Activated T-helper 2 cell treated with anti-CD3 and anti-CD28 coated beads, Interferon-gamma antibody, Interleukin-2, Interleukin-4, amounts not matched to agents 10 μg/mL and 5 μg/mL and 100 μg/mL, durations not matched to agents 14 hours and 24 hours and 36 hours (primary cell): ENCODE measurements at regions of chr5 and their contacts with region 1.

Region 1: GRCh38 chr5:81631124-81631523 is 119.8 kb downstream of the SSBP2 start:
- DNase-seq: peak; percentile 42
- H3K4me3 Mint-ChIP-seq: no peak overlapping the region
- H3K27ac Mint-ChIP-seq: no peak overlapping the region
- H3K4me1 Mint-ChIP-seq: peaks cover 17% of the 10 kb centered on the region
- H3K27me3 Mint-ChIP-seq: no peaks in the 10 kb centered on the region

Region 2: DNA sequence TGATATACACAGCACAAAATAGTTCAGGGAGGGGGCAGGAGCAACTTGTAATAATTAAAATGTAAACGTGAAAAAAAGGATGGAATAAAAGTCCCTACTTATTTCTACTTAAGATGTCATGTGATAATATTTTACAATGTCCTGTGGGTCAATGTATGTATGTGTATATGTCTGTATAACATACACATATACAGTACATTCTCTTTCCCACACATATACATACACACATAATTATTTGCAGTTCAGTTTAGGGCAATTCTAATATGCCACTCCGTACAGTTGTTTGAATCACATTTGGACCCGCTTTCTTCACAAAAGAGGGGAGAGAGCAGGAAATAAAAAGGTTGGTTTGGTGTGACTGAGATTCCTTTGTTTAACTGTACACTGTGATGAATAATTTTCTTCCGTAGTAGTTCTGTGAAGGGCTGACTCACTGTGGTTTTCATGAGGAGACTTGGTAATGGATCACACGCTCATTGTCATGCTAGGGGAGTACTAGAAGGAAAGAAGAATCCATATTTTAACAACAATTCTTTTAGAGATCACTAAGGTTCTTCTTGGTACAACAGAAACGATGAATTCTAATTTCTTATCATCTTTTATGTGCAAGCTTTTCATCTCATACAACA is 211.0 kb before region 1 on chr5:
- intact Hi-C with region 1: loop called (anchors 5 kb)
- DNase-seq: no peak
- H3K4me3 Mint-ChIP-seq: no peak overlapping the region
- H3K27ac Mint-ChIP-seq: peak overlapping the region; percentile 83
- H3K4me1 Mint-ChIP-seq: peaks cover 35% of the 10 kb centered on the region
- H3K27me3 Mint-ChIP-seq: no peaks in the 10 kb centered on the region

Region 3: GRCh38 chr5:81525690-81526089 is 105.4 kb before region 1 on chr5:
- intact Hi-C with region 1: loop called (anchors 5 kb)
- DNase-seq: no peak
- H3K4me3 Mint-ChIP-seq: no peak overlapping the region
- H3K27ac Mint-ChIP-seq: peak overlapping the region; percentile 79
- H3K4me1 Mint-ChIP-seq: peaks cover 27% of the 10 kb centered on the region
- H3K27me3 Mint-ChIP-seq: no peaks in the 10 kb centered on the region

Region 4: DNA sequence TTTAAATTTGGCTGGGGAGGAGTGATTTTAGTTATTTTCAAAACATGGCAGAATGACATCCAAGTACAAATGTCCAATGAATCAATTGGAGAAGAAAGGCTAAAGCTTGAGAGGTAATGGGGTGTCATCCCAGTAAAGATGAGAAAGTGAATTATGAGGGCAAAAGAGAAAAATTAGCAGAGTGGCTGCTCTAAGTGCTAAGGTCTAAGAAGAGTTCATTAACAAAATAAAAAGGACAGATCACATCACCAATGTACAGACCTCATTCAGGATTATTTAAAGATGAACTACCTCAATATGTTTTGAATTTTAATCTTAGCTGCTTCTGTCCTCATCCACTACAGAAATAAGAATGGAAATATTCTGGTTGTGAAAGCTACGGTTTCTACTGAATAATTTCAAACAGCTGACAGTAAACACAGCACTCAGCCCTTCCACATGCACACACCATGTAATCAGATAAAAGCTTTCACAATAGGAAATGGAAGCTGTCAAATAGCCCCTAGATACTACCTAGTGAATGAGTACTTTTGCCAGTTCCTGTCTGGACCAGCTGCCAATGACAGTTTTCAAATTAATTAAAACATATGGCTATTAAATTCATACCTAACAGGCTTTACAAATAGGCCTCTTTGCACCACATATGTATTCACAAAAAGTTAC is 51.7 kb before region 1 on chr5:
- intact Hi-C with region 1: loop called (anchors 2 kb)
- DNase-seq: no peak
- H3K4me3 Mint-ChIP-seq: no peak overlapping the region
- H3K27ac Mint-ChIP-seq: peak overlapping the region; percentile 2
- H3K4me1 Mint-ChIP-seq: peaks cover 29% of the 10 kb centered on the region
- H3K27me3 Mint-ChIP-seq: no peaks in the 10 kb centered on the region